Posterior vena cava (tissue), 2 donors: ENCODE measurements at regions of chr4 and their contacts with region 1.

Region 1: DNA sequence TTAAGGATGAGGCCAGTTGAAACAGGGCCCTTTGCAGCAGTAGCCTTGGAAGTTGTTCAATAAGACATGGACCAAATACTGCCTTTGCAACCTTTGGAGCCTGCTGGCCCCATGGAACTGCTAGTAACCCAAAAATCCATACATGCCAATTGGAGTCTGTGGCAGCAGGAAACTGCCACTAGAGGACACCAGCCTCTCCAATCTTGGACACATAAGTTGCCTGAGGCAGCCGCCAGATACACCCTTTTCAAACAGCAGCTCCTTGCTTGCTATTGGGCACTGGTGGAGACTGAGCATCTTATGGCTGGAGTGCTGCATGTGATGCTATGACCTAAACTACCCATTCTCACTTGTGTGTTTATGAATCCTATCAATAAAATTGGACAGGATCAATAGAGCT is 14.8 kb upstream of the LAP3 start:
- DNase-seq: no peak

Region 2: DNA sequence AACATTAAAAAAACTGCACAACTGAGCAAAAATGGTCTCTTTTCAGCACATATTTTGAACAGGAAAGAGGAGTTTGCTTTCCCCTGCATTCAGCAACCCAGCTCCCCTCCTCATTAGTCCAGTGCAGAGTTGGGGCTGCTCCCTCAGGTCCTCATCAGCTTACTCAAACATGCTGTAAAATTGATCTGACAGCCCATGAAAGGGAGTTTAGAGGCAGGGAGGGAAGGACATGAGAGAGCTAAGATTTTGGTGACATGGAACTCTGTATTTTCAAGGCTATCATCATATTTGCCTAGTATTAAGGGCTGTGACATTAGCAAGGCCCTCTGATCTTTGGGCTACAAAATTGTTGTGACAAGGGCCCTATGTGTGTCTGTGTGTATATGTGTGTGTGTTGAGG is 1130.3 kb before region 1 on chr4:
- intact Hi-C with region 1: loop called in 1 of 2 experiments (anchors 5 kb)
- DNase-seq: no peak